MCF 10A (cell line): ENCODE measurements at regions of chr18 and their contacts with region 1.

Region 1: GRCh38 chr18:24362758-24363157 is 34.9 kb downstream of the OSBPL1A start:
- DNase-seq: no peak
- H3K4me3 Mint-ChIP-seq: no peak overlapping the region
- H3K27ac Mint-ChIP-seq: no peak overlapping the region
- H3K4me1 Mint-ChIP-seq: no peaks in the 10 kb centered on the region
- H3K27me3 Mint-ChIP-seq: no peaks in the 10 kb centered on the region
- CTCF ChIP-seq: no peak

Region 2: GRCh38 chr18:24380163-24380747 is 17.5 kb after region 1 on chr18:
- CTCF ChIA-PET with region 1: interaction called, 31 read pairs
- POLR2A ChIA-PET with region 1: interaction called, 3 read pairs
- intact Hi-C with region 1: no loop called
- DNase-seq: no peak
- H3K4me3 Mint-ChIP-seq: no peak overlapping the region
- H3K27ac Mint-ChIP-seq: no peak overlapping the region
- H3K4me1 Mint-ChIP-seq: peaks cover 6% of the 10 kb centered on the region
- H3K27me3 Mint-ChIP-seq: no peaks in the 10 kb centered on the region
- CTCF ChIP-seq: no peak

Region 3: GRCh38 chr18:24413148-24413547 is 50.4 kb after region 1 on chr18:
- CTCF ChIA-PET with region 1: interaction called, 66 read pairs
- POLR2A ChIA-PET with region 1: no interaction called
- intact Hi-C with region 1: loop called (anchors 1 kb)
- DNase-seq: peak; percentile 36
- H3K4me3 Mint-ChIP-seq: no peak overlapping the region
- H3K27ac Mint-ChIP-seq: no peak overlapping the region
- H3K4me1 Mint-ChIP-seq: peaks cover 9% of the 10 kb centered on the region
- H3K27me3 Mint-ChIP-seq: no peaks in the 10 kb centered on the region
- CTCF ChIP-seq: peak; percentile 33

Region 4: DNA sequence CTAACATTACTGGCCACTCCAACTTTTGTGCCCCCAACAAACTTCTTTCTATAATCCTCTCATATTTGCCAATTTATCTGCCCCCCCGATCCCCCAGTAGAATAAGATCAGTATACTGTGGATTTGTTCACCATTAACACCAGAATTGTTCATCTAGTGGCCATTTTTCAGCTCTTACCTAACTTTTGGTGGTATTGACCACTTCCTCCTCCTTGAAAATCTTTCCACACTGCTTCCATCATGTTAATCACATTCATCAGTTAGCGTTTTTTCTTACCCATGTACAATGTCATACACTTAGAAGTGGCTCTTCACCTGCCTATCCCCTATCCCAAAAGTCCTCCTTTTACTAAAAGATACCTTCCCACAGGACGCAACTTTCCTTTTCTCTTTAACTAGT is 69.9 kb after region 1 on chr18:
- CTCF ChIA-PET with region 1: interaction called, 21 read pairs
- POLR2A ChIA-PET with region 1: interaction called, 5 read pairs
- intact Hi-C with region 1: loop called (anchors 5 kb)
- DNase-seq: no peak
- H3K4me3 Mint-ChIP-seq: no peak overlapping the region
- H3K27ac Mint-ChIP-seq: no peak overlapping the region
- H3K4me1 Mint-ChIP-seq: peaks cover 6% of the 10 kb centered on the region
- H3K27me3 Mint-ChIP-seq: no peaks in the 10 kb centered on the region
- CTCF ChIP-seq: no peak

Region 5: GRCh38 chr18:24469976-24470624 is 107.3 kb after region 1 on chr18:
- CTCF ChIA-PET with region 1: no interaction called
- POLR2A ChIA-PET with region 1: no interaction called
- intact Hi-C with region 1: no loop called
- DNase-seq: no peak
- H3K4me3 Mint-ChIP-seq: no peak overlapping the region
- H3K27ac Mint-ChIP-seq: no peak overlapping the region
- H3K4me1 Mint-ChIP-seq: no peaks in the 10 kb centered on the region
- H3K27me3 Mint-ChIP-seq: no peaks in the 10 kb centered on the region
- CTCF ChIP-seq: no peak

Region 6: DNA sequence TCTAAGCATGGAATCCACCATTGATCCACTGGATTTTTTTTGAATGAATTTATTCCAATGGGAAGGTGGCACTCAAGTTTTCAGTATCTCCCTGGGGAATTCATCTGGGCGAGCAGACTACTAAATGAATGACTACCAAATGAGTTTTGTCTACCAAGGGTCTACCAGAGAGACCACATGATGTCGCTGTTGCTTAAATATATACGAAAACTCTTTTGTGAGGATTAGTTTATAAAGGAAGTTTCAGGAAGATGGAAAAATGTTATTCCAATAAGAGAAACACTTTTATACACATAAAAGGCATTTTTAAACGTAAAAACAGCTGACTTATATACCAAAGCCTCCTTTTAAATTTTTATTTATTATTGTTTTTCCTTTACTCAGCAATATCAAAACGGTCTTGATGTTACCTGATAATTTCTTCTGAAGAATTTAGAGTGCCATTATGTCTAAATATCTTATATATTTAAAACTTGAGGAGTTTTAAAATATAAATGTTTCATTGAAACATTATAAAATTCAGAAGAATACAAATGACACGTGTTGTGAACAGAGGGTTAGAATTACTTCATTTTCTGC is 237.4 kb after region 1 on chr18:
- CTCF ChIA-PET with region 1: no interaction called
- POLR2A ChIA-PET with region 1: no interaction called
- intact Hi-C with region 1: no loop called
- DNase-seq: peak; percentile 65
- H3K4me3 Mint-ChIP-seq: no peak overlapping the region
- H3K27ac Mint-ChIP-seq: no peak overlapping the region
- H3K4me1 Mint-ChIP-seq: no peaks in the 10 kb centered on the region
- H3K27me3 Mint-ChIP-seq: peaks cover 37% of the 10 kb centered on the region
- CTCF ChIP-seq: peak; percentile 58